ENCODE measurements at regions of chr1 and their contacts with region 1.

Region 1: GRCh38 chr1:64000021-64000420 is 203.4 kb upstream of the UBE2U start:
- DNase-seq: no peak
- ATAC-seq: no peak
- H3K4me3 ChIP-seq: no peak overlapping the region
- H3K27ac ChIP-seq: no peak overlapping the region
- H3K4me1 ChIP-seq: peaks cover 4 to 12% of the 10 kb centered on the region in 2 donors
- H3K27me3 ChIP-seq: no peaks in the 10 kb centered on the region

Region 2: GRCh38 chr1:63935143-63935542 is 64.9 kb before region 1 on chr1:
- intact Hi-C with region 1: no loop called
- DNase-seq: no peak
- ATAC-seq: no peak
- H3K4me3 ChIP-seq: no peak overlapping the region
- H3K27ac ChIP-seq: peak overlapping the region in 1 of 2 donors; percentile 56
- H3K4me1 ChIP-seq: peaks cover 8 to 25% of the 10 kb centered on the region in 2 donors
- H3K27me3 ChIP-seq: no peaks in the 10 kb centered on the region

Region 3: GRCh38 chr1:63946866-63947491 is 53.0 kb before region 1 on chr1:
- intact Hi-C with region 1: loop called in 1 of 2 experiments (anchors 1 kb)
- DNase-seq: peak; percentile 89 to 92
- ATAC-seq: peak; percentile 87
- H3K4me3 ChIP-seq: no peak overlapping the region
- H3K27ac ChIP-seq: peak overlapping the region; percentile 97 to 100
- H3K4me1 ChIP-seq: peaks cover 22 to 31% of the 10 kb centered on the region in 2 donors
- H3K27me3 ChIP-seq: no peaks in the 10 kb centered on the region

Region 4: GRCh38 chr1:63958556-63958955 is 41.5 kb before region 1 on chr1:
- intact Hi-C with region 1: no loop called
- DNase-seq: no peak
- ATAC-seq: no peak
- H3K4me3 ChIP-seq: no peak overlapping the region
- H3K27ac ChIP-seq: no peak overlapping the region
- H3K4me1 ChIP-seq: peaks cover 9 to 11% of the 10 kb centered on the region in 2 donors
- H3K27me3 ChIP-seq: no peaks in the 10 kb centered on the region

Region 5: DNA sequence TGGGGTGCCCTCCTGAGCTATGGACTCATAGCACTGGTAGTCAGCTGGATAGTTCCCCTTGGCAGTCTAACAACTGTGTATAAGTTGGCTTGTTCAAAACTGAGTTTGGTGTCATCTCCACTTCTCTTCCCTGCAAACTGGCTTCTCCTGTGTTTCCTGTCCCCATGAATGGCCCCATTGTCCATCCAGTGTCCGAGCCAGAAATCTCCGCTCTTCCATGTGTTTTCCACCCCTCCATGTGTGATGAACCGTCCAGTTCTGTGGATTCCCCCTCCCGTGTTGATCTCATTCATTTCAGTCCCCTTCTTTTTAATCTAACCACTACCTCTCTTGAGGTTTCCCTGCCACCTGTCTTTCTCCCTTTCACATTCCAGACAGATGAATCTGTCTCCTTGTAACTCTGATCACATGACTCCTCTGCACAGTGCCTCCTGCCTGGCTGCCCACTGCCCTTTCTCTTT is 30.6 kb before region 1 on chr1:
- intact Hi-C with region 1: no loop called
- DNase-seq: no peak
- ATAC-seq: no peak
- H3K4me3 ChIP-seq: no peak overlapping the region
- H3K27ac ChIP-seq: peak overlapping the region; percentile 36 to 97
- H3K4me1 ChIP-seq: peaks cover 4 to 17% of the 10 kb centered on the region in 2 donors
- H3K27me3 ChIP-seq: no peaks in the 10 kb centered on the region

Measured in aorta (tissue), 5 donors.